GM13977 (cell line): ENCODE measurements at regions of chr9 and their contacts with region 1.

Region 1: DNA sequence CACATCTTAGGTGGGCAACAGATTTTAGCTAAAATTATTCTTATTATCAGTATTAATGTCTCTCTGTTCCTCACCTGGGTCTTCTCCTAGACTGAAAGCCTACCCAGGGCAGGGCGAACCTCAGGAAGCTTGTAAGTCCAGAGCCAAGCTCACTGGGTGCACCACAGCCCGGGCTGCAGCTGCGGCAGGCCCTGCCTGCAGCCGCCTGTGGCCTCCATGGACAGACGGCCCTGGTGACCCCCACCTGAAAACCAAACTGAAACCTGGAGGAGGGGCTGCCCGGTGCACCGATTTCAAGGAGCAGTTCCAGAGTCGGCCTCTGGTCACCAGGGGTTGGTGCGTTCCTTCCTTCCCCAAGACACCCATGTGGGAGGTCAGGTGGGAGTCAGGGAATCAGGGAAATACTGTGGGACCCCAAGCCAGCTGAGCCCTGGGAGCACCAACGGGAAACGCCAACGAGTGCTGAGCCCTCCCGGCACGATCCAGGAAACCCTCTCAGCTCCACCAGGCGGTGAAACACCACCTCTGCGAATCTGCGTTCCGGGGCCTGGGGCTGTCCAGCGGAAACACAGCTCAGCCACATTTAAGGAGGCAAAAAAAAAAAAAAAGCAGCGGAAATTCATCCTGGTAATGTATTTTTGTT is 68.6 kb upstream of the PPP1R26 start:
- DNase-seq: no peak
- CTCF ChIP-seq: no peak

Region 2: DNA sequence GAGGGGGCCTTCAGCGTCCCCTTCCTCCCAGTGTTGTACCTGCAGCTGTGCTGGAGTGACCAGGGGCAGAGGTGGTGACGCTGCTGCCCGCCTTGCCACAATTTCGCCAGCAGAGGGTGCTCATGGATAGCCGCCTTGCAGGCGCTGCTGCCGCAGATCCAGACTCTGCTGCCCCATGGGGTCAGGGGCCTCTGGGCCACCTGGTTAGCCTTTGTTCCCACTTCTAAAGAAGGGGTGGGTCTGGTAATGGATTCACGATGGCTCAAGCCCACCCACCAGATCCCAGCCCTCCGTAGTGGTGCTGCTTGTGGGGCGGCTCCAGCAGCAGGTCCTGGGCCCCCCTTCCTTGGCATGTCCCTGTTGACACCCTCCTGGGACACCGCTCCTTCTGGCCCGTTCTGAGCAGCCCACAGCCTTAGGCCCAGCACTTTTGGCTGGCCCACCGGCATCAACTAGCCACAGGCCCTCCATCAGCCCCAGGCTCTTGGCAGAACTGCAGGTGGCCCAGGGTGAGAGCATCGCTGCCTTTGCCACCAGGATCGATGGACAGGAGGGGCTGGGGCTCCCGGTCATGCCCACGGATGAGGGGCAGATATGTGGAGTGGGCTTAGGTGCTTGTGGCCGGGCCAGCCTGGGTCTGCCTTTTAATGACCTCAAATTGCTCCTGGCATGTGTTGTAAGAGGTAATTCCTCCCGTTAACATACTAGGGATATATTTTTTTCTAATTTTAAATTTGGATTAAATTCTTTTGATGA is 712.2 kb before region 1 on chr9:
- in situ Hi-C with region 1: loop called (anchors 25 kb)
- DNase-seq: peak; percentile 86
- CTCF ChIP-seq: peak; percentile 94